Heart left ventricle (tissue), 16 donors: ENCODE measurements at regions of chr11 and their contacts with region 1.

Region 1: GRCh38 chr11:11520231-11521015 is 101.4 kb downstream of the GALNT18 start:
- DNase-seq: no peak
- ATAC-seq: peak in 3 of 4 donors; percentile 20 to 27 (median 21)
- H3K4me3 ChIP-seq: no peak overlapping the region
- H3K27ac ChIP-seq: peak overlapping the region in 1 of 12 donors; percentile 29
- H3K4me1 ChIP-seq: peaks cover 0 to 69% (median 18%) of the 10 kb centered on the region in 12 donors
- H3K27me3 ChIP-seq: no peaks in the 10 kb centered on the region
- CTCF ChIP-seq: no peak
- POLR2A ChIP-seq: no peak

Region 2: GRCh38 chr11:11171854-11172253 is 348.6 kb before region 1 on chr11:
- intact Hi-C with region 1: no loop called
- DNase-seq: no peak
- ATAC-seq: peak in 1 of 4 donors; percentile 16
- H3K4me3 ChIP-seq: no peak overlapping the region
- H3K27ac ChIP-seq: peak overlapping the region in 3 of 12 donors; percentile 34 to 80 (median 40)
- H3K4me1 ChIP-seq: peaks cover 0 to 16% (median 10%) of the 10 kb centered on the region in 12 donors
- H3K27me3 ChIP-seq: no peaks in the 10 kb centered on the region
- CTCF ChIP-seq: no peak
- POLR2A ChIP-seq: no peak

Region 3: GRCh38 chr11:11407065-11407762 is 113.2 kb before region 1 on chr11:
- intact Hi-C with region 1: loop called in 2 of 10 experiments (anchors 5 to 10 kb)
- DNase-seq: peak in 3 of 5 donors; percentile 46 to 66 (median 59)
- ATAC-seq: peak; percentile 66 to 79 (median 74)
- H3K4me3 ChIP-seq: no peak overlapping the region
- H3K27ac ChIP-seq: peak overlapping the region; percentile 2 to 88 (median 55)
- H3K4me1 ChIP-seq: peaks cover 0 to 82% (median 41%) of the 10 kb centered on the region in 12 donors
- H3K27me3 ChIP-seq: peaks cover 0 to 5% (median 0%) of the 10 kb centered on the region in 9 donors
- CTCF ChIP-seq: peak in 7 of 12 donors; percentile 13 to 56 (median 45)
- POLR2A ChIP-seq: no peak

Region 4: DNA sequence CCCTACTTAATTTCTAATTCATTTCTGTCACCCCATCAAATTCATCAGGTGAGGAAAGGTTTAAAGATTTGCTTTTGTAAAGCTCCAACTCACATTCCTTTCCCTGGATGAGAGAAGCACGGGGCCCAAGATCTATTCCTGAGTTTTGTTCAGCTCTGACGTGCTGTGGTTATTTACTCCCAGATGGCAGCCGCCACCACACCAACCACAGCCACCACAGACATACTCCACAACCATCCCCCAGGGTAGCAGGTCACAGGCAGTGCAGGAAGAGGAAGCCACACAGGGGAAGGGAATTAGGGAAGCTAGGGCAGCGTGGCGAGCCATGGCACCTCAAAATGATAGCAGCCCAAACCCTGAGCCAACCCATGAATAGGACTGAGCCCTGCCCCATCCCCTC is 103.9 kb before region 1 on chr11:
- intact Hi-C with region 1: loop called in 1 of 10 experiments (anchors 10 kb)
- DNase-seq: peak in 1 of 5 donors; percentile 32
- ATAC-seq: peak in 3 of 4 donors; percentile 25 to 44 (median 28)
- H3K4me3 ChIP-seq: no peak overlapping the region
- H3K27ac ChIP-seq: no peak overlapping the region
- H3K4me1 ChIP-seq: peaks cover 0 to 43% (median 30%) of the 10 kb centered on the region in 12 donors
- H3K27me3 ChIP-seq: peaks cover 0 to 6% (median 0%) of the 10 kb centered on the region in 9 donors
- CTCF ChIP-seq: no peak
- POLR2A ChIP-seq: no peak